ENCODE measurements at regions of chr15 and their contacts with region 1.

Region 1: GRCh38 chr15:67833710-67834511 is 5.9 kb downstream of the RNU6-1 start:
- DNase-seq: peak; percentile 48 to 75
- ATAC-seq: peak; percentile 47 to 77
- H3K4me3 ChIP-seq: peak overlapping the region; percentile 53
- H3K27ac ChIP-seq: peak overlapping the region; percentile 31 to 65; a peak in 4 of 6 replicates
- H3K4me1 ChIP-seq: peaks cover 14% of the 10 kb centered on the region
- CTCF ChIP-seq: peak; percentile 55
- EP300 ChIP-seq: no peak
- POLR2A ChIP-seq: no peak
- RAD21 ChIP-seq: peak; percentile 52 to 75

Region 2: GRCh38 chr15:67465196-67465952 is 368.5 kb before region 1 on chr15:
- CTCF ChIA-PET with region 1: interaction called, 67 read pairs
- POLR2A ChIA-PET with region 1: no interaction called
- DNase-seq: no peak
- ATAC-seq: no peak
- H3K4me3 ChIP-seq: no peak overlapping the region
- H3K27ac ChIP-seq: no peak overlapping the region
- H3K4me1 ChIP-seq: no peaks in the 10 kb centered on the region
- CTCF ChIP-seq: no peak
- EP300 ChIP-seq: no peak
- POLR2A ChIP-seq: no peak
- RAD21 ChIP-seq: no peak

Region 3: DNA sequence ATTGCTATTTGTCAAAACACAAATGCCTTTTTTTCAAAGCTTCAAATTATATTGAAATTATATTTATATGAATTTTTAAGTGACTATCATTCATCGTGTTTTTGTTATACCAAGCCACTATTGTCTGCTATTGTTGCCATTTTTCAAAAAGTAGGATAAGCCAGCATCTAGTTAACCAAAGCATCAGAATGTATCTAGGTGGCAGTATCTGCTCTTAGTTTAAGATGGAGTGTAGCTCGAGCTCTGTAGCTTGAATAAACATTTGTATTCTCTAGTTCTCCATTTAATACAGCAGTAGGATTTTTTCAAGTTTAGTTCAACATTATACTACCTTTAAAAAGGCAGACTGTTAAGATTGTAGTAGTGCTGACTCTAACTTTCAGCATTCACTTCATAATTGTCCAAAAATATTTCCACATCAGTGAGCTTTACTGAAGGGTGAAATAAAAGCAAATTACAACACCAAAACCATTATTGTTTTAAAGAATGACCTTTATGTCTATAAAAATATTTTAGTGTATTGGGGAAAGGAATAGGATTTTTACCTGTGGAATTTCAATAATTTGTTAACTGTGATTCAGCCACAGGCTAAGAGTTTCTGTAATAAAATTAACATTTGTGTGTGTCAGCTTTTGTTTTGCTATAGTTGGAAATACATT is 332.6 kb before region 1 on chr15:
- CTCF ChIA-PET with region 1: interaction called, 30 read pairs
- POLR2A ChIA-PET with region 1: no interaction called
- DNase-seq: peak in 1 of 2 experiments; percentile 33
- ATAC-seq: peak; percentile 62 to 77; a peak in 4 of 6 replicates
- H3K4me3 ChIP-seq: no peak overlapping the region
- H3K27ac ChIP-seq: no peak overlapping the region
- H3K4me1 ChIP-seq: no peaks in the 10 kb centered on the region
- CTCF ChIP-seq: peak; percentile 56
- EP300 ChIP-seq: no peak
- POLR2A ChIP-seq: no peak
- RAD21 ChIP-seq: peak; percentile 50 to 65; a peak in 4 of 5 replicates

Region 4: GRCh38 chr15:67731112-67731761 is 102.7 kb before region 1 on chr15:
- CTCF ChIA-PET with region 1: no interaction called
- POLR2A ChIA-PET with region 1: no interaction called
- DNase-seq: no peak
- ATAC-seq: peak; percentile 26 to 34; a peak in 1 of 6 replicates
- H3K4me3 ChIP-seq: no peak overlapping the region
- H3K27ac ChIP-seq: no peak overlapping the region
- H3K4me1 ChIP-seq: no peaks in the 10 kb centered on the region
- CTCF ChIP-seq: no peak
- EP300 ChIP-seq: no peak
- POLR2A ChIP-seq: no peak
- RAD21 ChIP-seq: no peak

Region 5: GRCh38 chr15:67745073-67745993 is 88.6 kb before region 1 on chr15:
- CTCF ChIA-PET with region 1: no interaction called
- POLR2A ChIA-PET with region 1: no interaction called
- DNase-seq: no peak
- ATAC-seq: no peak
- H3K4me3 ChIP-seq: no peak overlapping the region
- H3K27ac ChIP-seq: peak overlapping the region in 1 of 2 experiments; percentile 12; a peak in 2 of 6 replicates
- H3K4me1 ChIP-seq: peaks cover 11% of the 10 kb centered on the region; the same call in 2 of the 3 replicates
- CTCF ChIP-seq: no peak
- EP300 ChIP-seq: no peak
- POLR2A ChIP-seq: no peak
- RAD21 ChIP-seq: no peak

Region 6: DNA sequence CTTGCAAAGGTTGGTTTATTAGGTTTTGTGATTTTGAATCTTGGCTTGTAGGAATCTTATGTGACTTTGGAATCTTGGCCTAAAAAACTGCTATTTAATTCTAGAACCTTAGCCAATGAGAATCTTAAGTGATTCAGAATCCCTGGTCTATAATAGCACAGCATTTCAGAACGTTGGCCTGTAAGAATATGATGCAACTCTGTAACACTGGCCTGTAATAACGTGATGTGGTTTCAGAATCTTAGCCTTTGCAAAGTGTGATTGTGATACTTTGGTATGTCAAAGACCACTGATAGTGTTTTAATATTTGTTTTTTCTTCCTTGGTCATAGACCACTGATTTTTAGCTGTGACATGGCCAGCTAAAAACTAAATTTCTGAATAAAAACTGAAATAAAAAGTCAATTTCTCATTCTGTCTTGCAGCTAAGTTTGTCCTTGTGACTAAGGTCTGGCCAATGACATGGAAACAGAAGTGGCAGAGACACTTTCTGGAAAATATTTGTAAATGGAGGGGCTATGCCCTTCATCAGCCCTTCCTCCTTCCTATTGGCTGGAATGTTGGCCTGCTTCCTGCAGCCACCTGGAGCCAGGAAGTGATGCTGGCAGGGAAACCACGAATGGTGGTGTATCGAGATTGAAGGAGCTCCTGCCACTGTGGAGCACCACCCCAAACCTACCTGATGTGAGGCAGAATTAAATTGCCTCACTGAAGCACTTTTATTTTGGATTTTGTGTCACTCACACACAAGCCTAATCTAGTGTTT is 702.6 kb after region 1 on chr15:
- CTCF ChIA-PET with region 1: no interaction called
- POLR2A ChIA-PET with region 1: no interaction called
- DNase-seq: no peak
- ATAC-seq: peak in 1 of 2 experiments; percentile 62; a peak in 1 of 6 replicates
- H3K4me3 ChIP-seq: no peak overlapping the region
- H3K27ac ChIP-seq: peak overlapping the region; percentile 15 to 55; a peak in 5 of 6 replicates
- H3K4me1 ChIP-seq: peaks cover 15% of the 10 kb centered on the region; the same call in 1 of the 3 replicates
- CTCF ChIP-seq: no peak
- EP300 ChIP-seq: no peak
- POLR2A ChIP-seq: no peak
- RAD21 ChIP-seq: no peak

Measured in A549 (cell line).